Endothelial cell of umbilical vein (primary cell): ENCODE measurements at regions of chr9 and their contacts with region 1.

Region 1: DNA sequence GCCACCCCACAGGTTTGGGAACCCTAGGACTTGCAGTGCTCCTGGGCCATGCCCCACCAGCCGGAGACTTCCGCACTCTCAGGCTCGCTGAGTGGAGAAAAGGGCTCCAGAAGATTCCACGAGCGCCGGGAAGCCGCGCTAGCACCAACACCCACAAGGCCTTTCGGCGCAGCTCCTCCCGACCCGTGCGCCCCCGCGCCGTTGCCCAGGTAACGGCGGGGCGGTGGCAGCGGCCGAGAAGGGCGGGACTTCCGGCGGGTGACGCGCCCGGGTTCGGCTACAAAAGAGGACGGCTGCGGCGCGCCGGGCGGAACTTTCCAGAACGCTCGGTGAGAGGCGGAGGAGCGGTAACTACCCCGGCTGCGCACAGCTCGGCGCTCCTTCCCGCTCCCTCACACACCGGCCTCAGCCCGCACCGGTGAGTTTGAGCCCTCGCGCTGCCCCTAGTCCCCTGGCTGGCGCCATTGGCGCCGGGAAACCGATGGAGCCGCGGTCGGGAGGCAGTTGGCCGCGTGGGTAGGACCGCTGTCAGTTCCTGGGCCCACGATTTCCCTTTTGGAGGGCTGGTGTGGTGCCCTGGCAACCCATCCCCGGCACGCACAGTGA is at the start of gene DNAJA1:
- DNase-seq: peak; percentile 92
- H3K4me3 ChIP-seq: peak within 1 kb of the TSS; percentile 57 to 100 (median 99)
- H3K27ac ChIP-seq: peak within 1 kb of the TSS; percentile 95
- H3K4me1 ChIP-seq: peaks cover 40% of the 10 kb centered on the region
- H3K27me3 ChIP-seq: no peaks in the 10 kb centered on the region
- CTCF ChIP-seq: no peak
- POLR2A ChIP-seq: peak; percentile 99
- total RNA-seq, gene DNAJA1: 177 and 182 TPM in 2 replicates

Region 2: DNA sequence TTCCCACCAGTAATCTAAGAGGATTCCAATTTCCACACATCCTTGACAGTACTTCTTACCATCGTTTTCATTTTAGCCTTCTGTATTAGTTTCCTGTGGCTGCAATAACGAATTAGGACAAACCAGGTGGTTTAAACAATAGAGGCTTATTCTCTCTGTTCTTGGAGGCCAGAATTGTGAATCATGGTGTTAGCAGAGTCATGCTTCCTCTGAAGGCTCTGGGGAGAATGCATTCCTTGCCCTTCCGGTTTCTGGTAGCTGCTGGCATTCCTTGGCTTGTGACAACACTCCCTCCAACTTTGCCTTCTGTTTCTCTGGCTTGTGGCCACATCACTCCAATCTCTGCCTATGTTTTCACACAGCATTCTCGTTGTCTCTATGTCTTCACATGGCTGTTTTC is 522.6 kb before region 1 on chr9:
- CTCF ChIA-PET with region 1: no interaction called
- POLR2A ChIA-PET with region 1: no interaction called
- dilution Hi-C with region 1: no loop called
- intact Hi-C with region 1: loop called (anchors 1 kb)
- DNase-seq: peak; percentile 85
- H3K4me3 ChIP-seq: no peak overlapping the region
- H3K27ac ChIP-seq: peak overlapping the region; percentile 90
- H3K4me1 ChIP-seq: peaks cover 42% of the 10 kb centered on the region
- H3K27me3 ChIP-seq: no peaks in the 10 kb centered on the region
- CTCF ChIP-seq: no peak
- POLR2A ChIP-seq: no peak

Region 3: GRCh38 chr9:32589083-32589723 is 435.9 kb before region 1 on chr9:
- CTCF ChIA-PET with region 1: no interaction called
- POLR2A ChIA-PET with region 1: interaction called, 10 read pairs
- dilution Hi-C with region 1: no loop called
- intact Hi-C with region 1: no loop called
- DNase-seq: peak; percentile 66
- H3K4me3 ChIP-seq: no peak overlapping the region
- H3K27ac ChIP-seq: no peak overlapping the region
- H3K4me1 ChIP-seq: no peaks in the 10 kb centered on the region
- H3K27me3 ChIP-seq: peaks cover 4 to 18% of the 10 kb centered on the region in 2 experiments
- CTCF ChIP-seq: peak; percentile 12 to 45
- POLR2A ChIP-seq: no peak

Region 4: DNA sequence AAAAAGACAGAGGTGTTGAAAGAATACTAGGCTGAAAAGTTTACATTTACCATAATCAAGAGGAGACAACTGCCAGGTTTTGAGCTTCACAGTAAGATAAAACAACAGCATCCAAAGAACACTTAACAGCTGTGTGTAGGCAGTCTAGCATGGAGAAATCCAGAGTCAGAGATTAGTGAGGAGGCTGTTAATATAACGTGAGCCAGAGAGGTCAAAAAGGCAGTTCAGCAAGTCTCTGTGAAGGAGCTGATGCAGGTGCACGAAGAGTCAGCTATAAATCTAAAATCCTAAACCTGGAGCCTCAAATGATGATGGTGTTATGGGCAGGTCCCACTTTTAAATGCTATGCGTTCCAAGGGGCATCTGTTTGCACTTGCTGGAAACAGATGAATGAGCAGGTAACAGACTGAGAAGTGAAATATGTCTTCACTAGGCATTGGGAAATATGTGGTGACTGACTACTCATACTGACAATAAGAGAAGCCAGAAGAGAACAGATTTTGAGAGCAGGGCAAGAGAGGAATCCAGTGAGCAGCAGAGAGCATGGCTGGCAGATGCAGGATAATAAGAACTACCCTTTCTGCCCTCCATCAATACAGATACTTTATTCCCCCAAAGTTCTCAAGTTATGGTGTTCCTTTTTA is 32.4 kb before region 1 on chr9:
- CTCF ChIA-PET with region 1: no interaction called
- POLR2A ChIA-PET with region 1: no interaction called
- dilution Hi-C with region 1: no loop called
- intact Hi-C with region 1: no loop called
- DNase-seq: no peak
- H3K4me3 ChIP-seq: no peak overlapping the region
- H3K27ac ChIP-seq: no peak overlapping the region
- H3K4me1 ChIP-seq: no peaks in the 10 kb centered on the region
- H3K27me3 ChIP-seq: no peaks in the 10 kb centered on the region
- CTCF ChIP-seq: no peak
- POLR2A ChIP-seq: no peak

Region 5: GRCh38 chr9:33044127-33044673 is 19.1 kb after region 1 on chr9:
- CTCF ChIA-PET with region 1: interaction called, 4 read pairs
- POLR2A ChIA-PET with region 1: interaction called, 21 read pairs
- dilution Hi-C with region 1: no loop called
- intact Hi-C with region 1: no loop called
- DNase-seq: peak; percentile 92
- H3K4me3 ChIP-seq: peak overlapping the region; percentile 51 to 74 (median 65)
- H3K27ac ChIP-seq: peak overlapping the region; percentile 81
- H3K4me1 ChIP-seq: peaks cover 11% of the 10 kb centered on the region
- H3K27me3 ChIP-seq: no peaks in the 10 kb centered on the region
- CTCF ChIP-seq: no peak
- POLR2A ChIP-seq: peak; percentile 80